Psoas muscle (tissue), 8 donors: ENCODE measurements at regions of chr12 and their contacts with region 1.

Region 1: DNA sequence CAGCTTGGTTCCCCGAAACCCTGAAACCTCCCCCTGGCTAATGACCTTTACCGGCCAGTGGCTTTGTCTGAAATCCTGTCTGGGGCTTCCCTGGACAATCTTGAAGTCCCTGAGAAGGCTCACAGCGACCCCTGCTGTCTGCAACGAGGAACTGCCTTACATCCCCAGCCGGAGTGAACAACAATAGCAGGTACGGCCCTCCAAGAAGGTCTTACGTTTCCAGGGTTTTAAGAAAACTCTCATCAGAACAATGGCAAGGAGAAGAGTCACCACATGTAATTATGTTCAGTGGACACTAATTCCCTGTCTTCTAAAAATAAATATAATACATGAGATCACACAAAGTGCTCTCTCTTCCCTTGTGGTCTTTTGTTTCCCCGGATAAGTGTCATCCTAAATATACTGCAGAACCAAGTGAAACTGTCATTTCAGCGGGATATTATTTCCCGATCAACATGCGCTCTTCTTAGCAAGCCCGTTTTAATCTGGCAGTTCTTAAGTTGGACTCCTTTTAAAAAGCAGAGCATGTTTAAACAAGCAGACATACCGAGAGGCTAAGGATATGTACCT is 53.3 kb downstream of the RBM19 start:
- DNase-seq: peak; percentile 48 to 69
- ATAC-seq: peak in 3 of 4 donors; percentile 68 to 78 (median 70)
- H3K4me3 ChIP-seq: no peak overlapping the region
- H3K27ac ChIP-seq: no peak overlapping the region
- H3K4me1 ChIP-seq: no peaks in the 10 kb centered on the region
- H3K27me3 ChIP-seq: no peaks in the 10 kb centered on the region
- CTCF ChIP-seq: peak; percentile 83

Region 2: DNA sequence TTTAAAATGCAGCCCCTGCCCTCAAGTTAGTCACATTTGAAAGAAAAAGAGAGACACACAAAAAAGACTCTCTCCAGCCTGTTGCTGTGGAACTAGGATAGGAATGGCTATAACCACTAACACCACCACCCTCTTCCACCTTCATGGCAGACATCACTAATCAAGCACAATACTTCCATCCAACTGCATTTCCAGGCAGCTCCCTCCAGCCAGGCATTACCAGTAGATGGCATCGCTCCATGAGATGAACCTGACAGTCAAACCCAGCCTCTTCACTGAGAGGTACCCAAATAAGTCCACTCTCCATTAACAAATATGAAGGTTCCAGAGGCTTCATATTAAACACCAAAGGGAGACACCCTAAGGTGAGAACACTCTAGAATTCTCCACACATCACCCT is 602.4 kb before region 1 on chr12:
- intact Hi-C with region 1: loop called in 1 of 2 experiments (anchors 5 kb)
- DNase-seq: no peak
- ATAC-seq: no peak
- H3K4me3 ChIP-seq: no peak overlapping the region
- H3K27ac ChIP-seq: no peak overlapping the region
- H3K4me1 ChIP-seq: peaks cover 4% of the 10 kb centered on the region
- H3K27me3 ChIP-seq: no peaks in the 10 kb centered on the region
- CTCF ChIP-seq: no peak

Region 3: DNA sequence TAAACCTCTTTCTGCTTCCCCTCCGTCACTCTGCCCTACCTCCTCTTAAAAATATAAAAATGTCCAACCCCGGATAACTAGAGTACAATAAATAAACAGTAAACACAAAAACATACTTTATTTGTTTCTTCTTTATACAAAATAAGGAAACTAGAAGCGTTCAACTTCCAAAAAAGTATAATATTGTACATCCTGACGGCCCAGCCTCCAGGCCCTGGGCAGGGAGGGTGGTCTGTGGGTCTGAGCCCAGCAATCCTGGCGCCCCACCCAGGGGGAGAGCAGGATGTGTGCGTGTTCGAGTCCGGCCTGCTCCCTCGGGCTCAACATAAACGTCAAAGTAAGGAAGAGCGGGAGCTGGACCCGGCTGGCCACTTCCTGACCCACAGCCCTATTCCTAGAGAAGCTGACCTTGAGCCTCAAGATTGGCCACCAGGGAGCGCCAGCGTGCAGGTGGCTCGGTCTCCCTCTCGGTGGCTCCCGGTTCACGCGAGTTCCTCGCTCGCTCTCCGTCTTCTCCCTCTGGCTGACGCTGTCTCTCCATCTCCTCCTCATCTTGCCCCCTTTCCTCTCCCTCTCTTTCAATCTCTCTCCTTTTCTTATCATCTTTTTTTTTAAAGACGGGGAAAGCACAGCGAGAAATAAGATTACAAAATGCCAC is 450.6 kb before region 1 on chr12:
- intact Hi-C with region 1: loop called (anchors 2 to 5 kb)
- DNase-seq: peak; percentile 81 to 86
- ATAC-seq: peak; percentile 69 to 83 (median 80)
- H3K4me3 ChIP-seq: peak overlapping the region; percentile 41
- H3K27ac ChIP-seq: no peak overlapping the region
- H3K4me1 ChIP-seq: peaks cover 17% of the 10 kb centered on the region
- H3K27me3 ChIP-seq: peaks cover 2 to 86% (median 33%) of the 10 kb centered on the region in 3 donors
- CTCF ChIP-seq: peak; percentile 72

Region 4: GRCh38 chr12:113638460-113638775 is 274.4 kb before region 1 on chr12:
- intact Hi-C with region 1: no loop called
- DNase-seq: no peak
- ATAC-seq: no peak
- H3K4me3 ChIP-seq: no peak overlapping the region
- H3K27ac ChIP-seq: no peak overlapping the region
- H3K4me1 ChIP-seq: no peaks in the 10 kb centered on the region
- H3K27me3 ChIP-seq: peaks cover 0 to 48% (median 9%) of the 10 kb centered on the region in 3 donors
- CTCF ChIP-seq: no peak

Region 5: GRCh38 chr12:113757221-113758002 is 155.4 kb before region 1 on chr12:
- intact Hi-C with region 1: no loop called
- DNase-seq: no peak
- ATAC-seq: no peak
- H3K4me3 ChIP-seq: no peak overlapping the region
- H3K27ac ChIP-seq: no peak overlapping the region
- H3K4me1 ChIP-seq: no peaks in the 10 kb centered on the region
- H3K27me3 ChIP-seq: peaks cover 0 to 15% (median 11%) of the 10 kb centered on the region in 3 donors
- CTCF ChIP-seq: no peak